ENCODE measurements at regions of chr16 and their contacts with region 1.

Region 1: GRCh38 chr16:87278191-87279095 is 38.7 kb downstream of the C16orf95 start:
- DNase-seq: peak; percentile 79 to 86
- H3K4me3 ChIP-seq: no peak overlapping the region
- H3K4me3 Mint-ChIP-seq: no peak overlapping the region
- H3K27ac Mint-ChIP-seq: no peak overlapping the region
- H3K4me1 ChIP-seq: 0 out of 2 replicates have a peak, but pooled peaks cover 4% of the 10 kb centered on the region
- H3K4me1 Mint-ChIP-seq: no peaks in the 10 kb centered on the region
- H3K27me3 ChIP-seq: no peaks in the 10 kb centered on the region; the same call in 1 of the 2 replicates
- H3K27me3 Mint-ChIP-seq: peaks cover 25% of the 10 kb centered on the region
- CTCF ChIP-seq: peak; percentile 95 to 98

Region 2: GRCh38 chr16:87062569-87063442 is 215.6 kb before region 1 on chr16:
- CTCF ChIA-PET with region 1: interaction called, 4 read pairs
- POLR2A ChIA-PET with region 1: no interaction called
- intact Hi-C with region 1: loop called (anchors 10 kb)
- DNase-seq: peak; percentile 65 to 80
- H3K4me3 ChIP-seq: no peak overlapping the region
- H3K4me3 Mint-ChIP-seq: no peak overlapping the region
- H3K27ac Mint-ChIP-seq: no peak overlapping the region
- H3K4me1 ChIP-seq: no peaks in the 10 kb centered on the region
- H3K4me1 Mint-ChIP-seq: no peaks in the 10 kb centered on the region
- H3K27me3 ChIP-seq: no peaks in the 10 kb centered on the region
- H3K27me3 Mint-ChIP-seq: peaks cover 26% of the 10 kb centered on the region
- CTCF ChIP-seq: peak; percentile 90 to 92

Region 3: GRCh38 chr16:87203060-87203656 is 75.3 kb before region 1 on chr16:
- CTCF ChIA-PET with region 1: interaction called, 9 read pairs
- POLR2A ChIA-PET with region 1: no interaction called
- intact Hi-C with region 1: loop called (anchors 1 kb)
- DNase-seq: peak; percentile 64 to 77
- H3K4me3 ChIP-seq: no peak overlapping the region
- H3K4me3 Mint-ChIP-seq: no peak overlapping the region
- H3K27ac Mint-ChIP-seq: no peak overlapping the region
- H3K4me1 ChIP-seq: no peaks in the 10 kb centered on the region
- H3K4me1 Mint-ChIP-seq: no peaks in the 10 kb centered on the region
- H3K27me3 ChIP-seq: no peaks in the 10 kb centered on the region
- H3K27me3 Mint-ChIP-seq: peaks cover 11% of the 10 kb centered on the region
- CTCF ChIP-seq: peak; percentile 77

Measured in Caco-2 (cell line).